ENCODE measurements at regions of chr9 and their contacts with region 1.

Region 1: DNA sequence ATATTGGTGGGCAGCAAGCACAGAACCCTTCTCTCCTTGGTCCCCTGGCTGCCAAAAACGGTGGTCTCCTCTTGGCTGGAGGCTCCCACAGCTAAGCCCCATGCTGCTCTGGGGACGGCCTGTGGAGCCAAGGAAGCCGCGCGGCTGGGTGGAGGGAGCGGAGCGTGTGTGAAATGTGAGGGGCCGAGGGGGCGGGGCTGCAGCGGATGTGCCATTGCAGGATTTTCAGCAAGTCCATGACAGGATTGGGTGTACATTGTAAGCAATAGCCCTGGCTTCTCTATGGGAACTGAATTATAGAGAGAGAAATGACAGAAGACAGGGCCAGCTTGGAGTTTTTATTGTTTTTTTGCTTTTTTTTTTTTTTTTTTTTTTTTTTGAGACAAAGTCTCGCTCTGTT is 336.5 kb downstream of the DIRAS2 start:
- DNase-seq: no peak
- H3K4me3 ChIP-seq: no peak overlapping the region
- H3K27ac ChIP-seq: no peak overlapping the region
- H3K27me3 ChIP-seq: no peaks in the 10 kb centered on the region
- CTCF ChIP-seq: no peak

Region 2: DNA sequence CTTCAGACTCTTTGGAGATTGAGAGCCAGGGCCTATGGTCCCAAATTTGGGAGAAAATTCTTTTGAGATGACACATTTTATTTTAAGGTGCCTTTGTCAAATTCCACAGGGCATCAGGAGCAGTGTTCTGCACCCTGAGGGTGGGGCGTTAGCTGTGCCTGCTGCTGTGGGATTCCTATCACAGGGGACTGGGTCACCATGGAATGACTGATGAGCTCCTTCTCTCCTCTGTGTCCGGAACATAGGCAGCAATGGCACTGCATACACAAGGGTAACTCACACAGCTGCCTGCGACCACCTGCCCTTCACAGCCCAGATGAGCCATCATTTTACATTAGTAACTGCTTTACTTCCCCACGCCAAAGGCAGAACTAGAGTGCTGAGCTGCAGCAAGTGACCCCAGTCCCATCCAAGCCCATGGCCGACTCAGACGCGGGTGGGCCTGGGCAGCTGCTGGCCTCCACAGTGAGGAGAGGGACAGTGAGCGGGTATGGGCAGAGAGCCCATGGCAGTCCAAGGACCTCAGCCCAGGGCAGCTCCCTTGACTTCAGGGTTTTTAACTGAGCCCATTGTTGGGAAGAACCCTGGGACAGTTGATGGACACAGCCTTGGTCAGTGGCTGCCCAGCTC is 607.7 kb before region 1 on chr9:
- CTCF ChIA-PET with region 1: no interaction called
- POLR2A ChIA-PET with region 1: interaction called, 13 read pairs
- DNase-seq: no peak
- H3K4me3 ChIP-seq: no peak overlapping the region
- H3K27ac ChIP-seq: no peak overlapping the region
- H3K27me3 ChIP-seq: no peaks in the 10 kb centered on the region
- CTCF ChIP-seq: no peak

Region 3: GRCh38 chr9:90433398-90433941 is 127.3 kb after region 1 on chr9:
- CTCF ChIA-PET with region 1: no interaction called
- POLR2A ChIA-PET with region 1: no interaction called
- DNase-seq: no peak
- H3K4me3 ChIP-seq: no peak overlapping the region
- H3K27ac ChIP-seq: no peak overlapping the region
- H3K27me3 ChIP-seq: no peaks in the 10 kb centered on the region
- CTCF ChIP-seq: no peak

Measured in AG04450 (cell line).